Esophagus muscularis mucosa (tissue), 4 donors: ENCODE measurements at regions of chr12 and their contacts with region 1.

Region 1: DNA sequence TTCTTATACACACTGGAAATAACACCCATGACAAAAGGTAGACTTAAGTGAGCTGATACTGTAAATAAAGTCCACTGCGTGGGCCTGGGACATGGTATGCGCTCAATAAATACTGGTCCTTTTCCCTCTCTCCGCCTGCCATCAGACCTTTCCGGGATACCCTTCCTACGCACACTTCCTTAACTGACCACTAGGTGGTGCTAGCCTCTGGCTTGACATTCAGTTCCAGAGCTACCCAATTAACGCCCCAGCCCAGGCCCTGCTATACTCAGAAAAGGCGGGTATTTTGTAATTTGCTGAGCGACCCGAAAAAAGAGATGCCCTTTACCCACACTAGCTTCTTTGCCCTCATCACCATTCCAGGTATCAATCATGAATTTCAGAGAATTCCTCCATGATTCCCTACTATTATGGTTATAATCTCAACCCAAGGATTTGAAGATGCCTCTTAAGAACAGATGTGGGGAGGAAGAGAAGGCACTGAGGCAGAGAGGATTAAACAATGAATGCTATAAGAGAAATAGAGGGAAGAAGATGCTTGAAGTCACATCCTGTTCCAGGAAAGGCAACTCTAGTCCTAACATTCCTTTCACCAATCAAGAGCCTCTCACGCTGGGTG is 3.9 kb upstream of the LRP1 start:
- DNase-seq: no peak
- H3K4me3 ChIP-seq: no peak overlapping the region
- H3K27ac ChIP-seq: no peak overlapping the region
- H3K4me1 ChIP-seq: peaks cover 4 to 19% (median 17%) of the 10 kb centered on the region in 4 donors
- H3K27me3 ChIP-seq: peaks cover 0 to 2% (median 0%) of the 10 kb centered on the region in 4 donors
- CTCF ChIP-seq: peak; percentile 98 to 99 (median 99)
- EP300 ChIP-seq: no peak
- POLR2A ChIP-seq: no peak

Region 2: DNA sequence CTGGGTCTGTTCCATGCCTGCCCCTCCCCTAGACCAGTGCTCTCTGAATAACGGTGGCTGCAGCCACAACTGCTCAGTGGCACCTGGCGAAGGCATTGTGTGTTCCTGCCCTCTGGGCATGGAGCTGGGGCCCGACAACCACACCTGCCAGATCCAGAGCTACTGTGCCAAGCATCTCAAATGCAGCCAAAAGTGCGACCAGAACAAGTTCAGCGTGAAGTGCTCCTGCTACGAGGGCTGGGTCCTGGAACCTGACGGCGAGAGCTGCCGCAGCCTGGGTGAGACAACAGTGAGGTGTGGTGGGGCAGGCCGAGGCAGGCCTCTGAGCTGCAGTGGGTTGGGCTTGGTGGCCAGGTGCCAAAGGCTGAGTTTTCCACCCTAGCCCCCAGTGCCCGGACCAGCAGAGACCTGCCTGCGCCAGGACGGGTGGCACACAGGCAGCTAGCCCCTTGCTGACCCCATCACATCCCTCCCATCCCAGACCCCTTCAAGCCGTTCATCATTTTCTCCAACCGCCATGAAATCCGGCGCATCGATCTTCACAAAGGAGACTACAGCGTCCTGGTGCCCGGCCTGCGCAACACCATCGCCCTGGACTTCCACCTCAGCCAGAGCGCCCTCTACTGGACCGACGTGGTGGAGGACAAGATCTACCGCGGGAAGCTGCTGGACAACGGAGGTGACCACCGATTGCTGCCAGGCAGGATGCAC is 51.2 kb after region 1 on chr12:
- intact Hi-C with region 1: loop called (anchors 2 kb)
- DNase-seq: peak; percentile 94
- H3K4me3 ChIP-seq: no peak overlapping the region
- H3K27ac ChIP-seq: peak overlapping the region; percentile 5 to 59 (median 32)
- H3K4me1 ChIP-seq: peaks cover 0 to 27% (median 13%) of the 10 kb centered on the region in 4 donors
- H3K27me3 ChIP-seq: no peaks in the 10 kb centered on the region
- CTCF ChIP-seq: peak; percentile 70 to 78 (median 71)
- EP300 ChIP-seq: no peak
- POLR2A ChIP-seq: no peak

Region 3: GRCh38 chr12:57182921-57183790 is 58.8 kb after region 1 on chr12:
- intact Hi-C with region 1: loop called (anchors 2 kb)
- DNase-seq: no peak
- H3K4me3 ChIP-seq: no peak overlapping the region
- H3K27ac ChIP-seq: no peak overlapping the region
- H3K4me1 ChIP-seq: no peaks in the 10 kb centered on the region
- H3K27me3 ChIP-seq: no peaks in the 10 kb centered on the region
- CTCF ChIP-seq: peak; percentile 82 to 93 (median 90)
- EP300 ChIP-seq: no peak
- POLR2A ChIP-seq: no peak